ENCODE measurements at regions of chr1 and their contacts with region 1.

Region 1: GRCh38 chr1:54581621-54582035 is 33.6 kb downstream of the ACOT11 start:
- DNase-seq: peak; percentile 98
- H3K4me3 ChIP-seq: no peak overlapping the region
- H3K27ac ChIP-seq: peak overlapping the region; percentile 85 to 91 (median 89)
- H3K4me1 ChIP-seq: peaks cover 0 to 56% (median 50%) of the 10 kb centered on the region in 4 donors
- H3K27me3 ChIP-seq: no peaks in the 10 kb centered on the region
- CTCF ChIP-seq: peak in 1 of 4 experiments; percentile 14
- EP300 ChIP-seq: peak in 3 of 4 donors; percentile 31 to 84 (median 75)
- POLR2A ChIP-seq: peak; percentile 39 to 73

Region 2: GRCh38 chr1:54547601-54548388 is 33.8 kb before region 1 on chr1 and contains the start of gene ACOT11:
- intact Hi-C with region 1: loop called (anchors 1 kb)
- DNase-seq: peak; percentile 98
- H3K4me3 ChIP-seq: peak within 1 kb of the TSS; percentile 17 to 51 (median 46)
- H3K27ac ChIP-seq: peak within 1 kb of the TSS; percentile 83 to 90 (median 88)
- H3K4me1 ChIP-seq: peaks cover 0 to 53% (median 51%) of the 10 kb centered on the region in 4 donors
- H3K27me3 ChIP-seq: no peaks in the 10 kb centered on the region
- CTCF ChIP-seq: peak; percentile 66 to 93 (median 78)
- EP300 ChIP-seq: peak; percentile 30 to 83 (median 60)
- POLR2A ChIP-seq: peak in 1 of 2 donors; percentile 50
- total RNA-seq, gene ACOT11: 8.9 to 30.5 (median 19.8) TPM

Region 3: DNA sequence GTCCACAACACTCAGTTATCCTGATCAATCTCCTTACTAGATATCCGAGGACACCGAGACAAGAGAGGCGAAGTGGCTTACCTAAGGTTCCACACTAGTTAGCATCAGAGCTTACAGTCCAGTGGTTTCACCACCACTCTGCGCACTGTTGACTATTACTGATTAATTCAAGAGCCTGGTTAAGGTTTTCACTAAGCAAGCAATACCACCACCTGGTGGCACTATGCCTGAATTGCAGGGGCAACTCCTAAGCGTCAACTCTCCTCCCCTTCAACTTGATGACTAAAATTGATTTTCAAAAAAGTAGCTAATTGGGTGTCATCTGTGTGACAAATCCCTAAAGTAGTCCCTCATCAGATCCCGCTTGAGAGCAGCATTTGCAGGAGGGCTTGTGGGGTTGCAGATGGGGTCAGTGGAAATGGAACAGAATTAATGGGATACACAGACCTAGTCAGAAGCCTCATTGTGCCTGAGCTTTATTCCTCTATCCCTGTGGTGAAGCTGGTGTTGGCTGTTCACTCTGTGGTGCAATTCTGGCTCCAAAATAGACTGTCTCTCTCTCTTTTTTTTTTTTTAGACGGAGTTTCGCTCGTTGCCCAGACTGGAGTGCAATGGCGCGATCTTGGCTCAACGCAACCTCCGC is 210.4 kb after region 1 on chr1:
- intact Hi-C with region 1: loop called (anchors 10 kb)
- DNase-seq: no peak
- H3K4me3 ChIP-seq: no peak overlapping the region
- H3K27ac ChIP-seq: peak overlapping the region in 3 of 4 donors; percentile 69 to 79 (median 75)
- H3K4me1 ChIP-seq: peaks cover 0 to 39% (median 20%) of the 10 kb centered on the region in 4 donors
- H3K27me3 ChIP-seq: no peaks in the 10 kb centered on the region
- CTCF ChIP-seq: peak in 3 of 4 experiments; percentile 28 to 39 (median 28)
- EP300 ChIP-seq: no peak
- POLR2A ChIP-seq: no peak

Measured in sigmoid colon (tissue), 7 donors.